ENCODE measurements at regions of chr2 and their contacts with region 1.

Region 1: DNA sequence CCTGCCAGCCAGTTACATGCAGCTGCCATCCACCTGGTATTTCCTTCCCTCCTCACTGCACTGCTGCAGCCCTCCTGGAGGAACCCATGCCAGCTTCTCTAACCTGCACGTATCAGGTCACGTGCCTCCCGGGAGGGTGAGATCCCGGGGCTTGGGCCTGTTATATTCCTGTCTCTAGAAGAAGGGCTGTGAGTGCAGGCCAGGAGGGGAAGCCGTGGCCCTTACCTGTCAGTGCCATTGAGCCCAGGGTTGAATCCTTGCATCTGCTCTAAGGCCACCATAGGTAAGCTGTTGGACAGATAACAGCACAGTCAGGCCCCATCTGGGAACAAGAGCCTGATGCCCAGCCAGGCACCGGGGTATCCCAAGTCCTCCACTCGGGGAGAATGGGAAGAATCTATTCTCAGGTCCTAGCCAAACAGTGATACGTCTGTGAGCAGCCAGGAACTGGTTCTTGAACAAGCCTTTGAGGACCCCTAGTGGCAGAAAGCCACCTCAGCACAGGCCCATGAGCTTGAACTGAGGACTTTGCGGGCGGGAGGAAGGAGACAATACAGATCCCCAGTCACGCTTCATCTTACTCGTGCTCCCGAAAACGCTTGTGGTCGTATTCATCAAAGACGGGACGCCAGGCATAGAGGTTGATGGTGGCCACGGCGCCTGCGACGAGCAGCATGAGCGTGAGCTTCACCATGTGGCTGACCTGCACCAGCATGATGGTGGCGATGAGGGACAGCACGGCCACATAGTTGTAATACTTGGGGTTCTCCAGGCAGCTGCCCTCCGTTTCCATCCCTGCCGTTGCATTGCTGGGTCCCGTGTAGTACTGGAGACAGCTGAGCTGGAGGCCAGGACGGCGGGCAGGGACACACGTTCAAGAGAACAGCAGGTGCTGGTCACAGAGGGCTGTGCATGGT is 34.4 kb downstream of the CENPO start:
- DNase-seq: peak; percentile 80 to 88 (median 82)
- ATAC-seq: peak; percentile 97
- H3K4me3 ChIP-seq: no peak overlapping the region
- H3K27ac ChIP-seq: no peak overlapping the region
- H3K4me1 ChIP-seq: peaks cover 0 to 5% of the 10 kb centered on the region in 2 experiments; a peak in 2 of 5 replicates
- H3K27me3 ChIP-seq: no peaks in the 10 kb centered on the region
- CTCF ChIP-seq: peak; percentile 85 to 95 (median 94)
- EP300 ChIP-seq: no peak
- POLR2A ChIP-seq: no peak; the same call in 1 of the 2 replicates
- RAD21 ChIP-seq: peak; percentile 89 to 93

Region 2: GRCh38 chr2:24409700-24410556 is 417.7 kb before region 1 on chr2:
- CTCF ChIA-PET with region 1: interaction called, 32 read pairs
- POLR2A ChIA-PET with region 1: no interaction called
- in situ Hi-C with region 1: no loop called
- intact Hi-C with region 1: loop called (anchors 1 kb)
- DNase-seq: peak; percentile 57 to 78 (median 63)
- ATAC-seq: peak; percentile 95
- H3K4me3 ChIP-seq: no peak overlapping the region
- H3K27ac ChIP-seq: no peak overlapping the region
- H3K4me1 ChIP-seq: peaks cover 0 to 3% of the 10 kb centered on the region in 2 experiments; a peak in 1 of 5 replicates
- H3K27me3 ChIP-seq: no peaks in the 10 kb centered on the region
- CTCF ChIP-seq: peak; percentile 79 to 91 (median 80)
- EP300 ChIP-seq: no peak
- POLR2A ChIP-seq: no peak
- RAD21 ChIP-seq: peak; percentile 93 to 95

Region 3: GRCh38 chr2:24490674-24491625 is 336.6 kb before region 1 on chr2 and contains the start of gene NCOA1:
- CTCF ChIA-PET with region 1: no interaction called
- POLR2A ChIA-PET with region 1: no interaction called
- in situ Hi-C with region 1: no loop called
- intact Hi-C with region 1: loop called (anchors 5 kb)
- DNase-seq: peak; percentile 88 to 97 (median 92)
- ATAC-seq: peak; percentile 87
- H3K4me3 ChIP-seq: peak within 1 kb of the TSS; percentile 69
- H3K27ac ChIP-seq: peak within 1 kb of the TSS; percentile 77
- H3K4me1 ChIP-seq: peaks cover 24 to 44% of the 10 kb centered on the region in 2 experiments
- H3K27me3 ChIP-seq: no peaks in the 10 kb centered on the region
- CTCF ChIP-seq: peak in 2 of 3 experiments; percentile 8 to 30; a peak in 3 of 6 replicates
- EP300 ChIP-seq: 0 out of 2 replicates have a peak, but pooled peaks have one; percentile 34
- POLR2A ChIP-seq: peak; percentile 57; the same call in 1 of the 2 replicates
- RAD21 ChIP-seq: peak in 1 of 2 experiments; percentile 31
- polyA plus RNA-seq, gene NCOA1: 4.9 to 6.2 TPM

Region 4: DNA sequence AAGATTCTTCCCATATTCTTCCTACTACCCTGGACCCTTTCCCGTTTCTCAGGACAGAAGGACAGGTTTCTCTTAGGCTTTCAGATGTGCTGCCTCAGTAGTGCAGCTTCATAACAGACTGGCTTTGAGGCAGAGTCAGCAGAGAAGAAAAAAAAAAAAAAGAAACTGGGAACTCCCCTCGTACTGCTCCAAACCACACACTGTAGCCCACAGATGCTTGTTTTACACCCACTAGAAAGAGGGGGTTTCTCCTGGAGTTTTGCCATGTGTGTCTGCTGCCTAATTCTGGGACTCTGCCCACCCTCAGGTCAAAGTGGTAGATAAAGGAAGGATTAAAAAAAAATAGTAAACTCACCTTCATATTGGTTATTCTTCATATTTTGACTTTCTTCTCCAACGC is 240.6 kb before region 1 on chr2:
- CTCF ChIA-PET with region 1: no interaction called
- POLR2A ChIA-PET with region 1: no interaction called
- in situ Hi-C with region 1: no loop called
- intact Hi-C with region 1: no loop called
- DNase-seq: no peak
- ATAC-seq: no peak
- H3K4me3 ChIP-seq: no peak overlapping the region
- H3K27ac ChIP-seq: no peak overlapping the region
- H3K4me1 ChIP-seq: peaks cover 3 to 4% of the 10 kb centered on the region in 2 experiments; a peak in 2 of 5 replicates
- H3K27me3 ChIP-seq: no peaks in the 10 kb centered on the region
- CTCF ChIP-seq: no peak
- EP300 ChIP-seq: no peak
- POLR2A ChIP-seq: no peak
- RAD21 ChIP-seq: no peak

Region 5: GRCh38 chr2:24754985-24755705 is 72.4 kb before region 1 on chr2:
- CTCF ChIA-PET with region 1: no interaction called
- POLR2A ChIA-PET with region 1: no interaction called
- in situ Hi-C with region 1: no loop called
- intact Hi-C with region 1: no loop called
- DNase-seq: peak in 1 of 4 experiments; percentile 14
- ATAC-seq: peak; percentile 71
- H3K4me3 ChIP-seq: no peak overlapping the region
- H3K27ac ChIP-seq: no peak overlapping the region
- H3K4me1 ChIP-seq: peaks cover 0 to 13% of the 10 kb centered on the region in 2 experiments; a peak in 2 of 5 replicates
- H3K27me3 ChIP-seq: no peaks in the 10 kb centered on the region
- CTCF ChIP-seq: no peak
- EP300 ChIP-seq: no peak
- POLR2A ChIP-seq: no peak
- RAD21 ChIP-seq: no peak

Region 6: GRCh38 chr2:24779116-24779515 is 48.5 kb before region 1 on chr2:
- CTCF ChIA-PET with region 1: no interaction called
- POLR2A ChIA-PET with region 1: no interaction called
- in situ Hi-C with region 1: no loop called
- intact Hi-C with region 1: no loop called
- DNase-seq: no peak
- ATAC-seq: no peak
- H3K4me3 ChIP-seq: no peak overlapping the region
- H3K27ac ChIP-seq: no peak overlapping the region
- H3K4me1 ChIP-seq: no peaks in the 10 kb centered on the region
- H3K27me3 ChIP-seq: no peaks in the 10 kb centered on the region; a peak in 1 of 5 replicates
- CTCF ChIP-seq: no peak
- EP300 ChIP-seq: no peak
- POLR2A ChIP-seq: no peak
- RAD21 ChIP-seq: no peak

Region 7: DNA sequence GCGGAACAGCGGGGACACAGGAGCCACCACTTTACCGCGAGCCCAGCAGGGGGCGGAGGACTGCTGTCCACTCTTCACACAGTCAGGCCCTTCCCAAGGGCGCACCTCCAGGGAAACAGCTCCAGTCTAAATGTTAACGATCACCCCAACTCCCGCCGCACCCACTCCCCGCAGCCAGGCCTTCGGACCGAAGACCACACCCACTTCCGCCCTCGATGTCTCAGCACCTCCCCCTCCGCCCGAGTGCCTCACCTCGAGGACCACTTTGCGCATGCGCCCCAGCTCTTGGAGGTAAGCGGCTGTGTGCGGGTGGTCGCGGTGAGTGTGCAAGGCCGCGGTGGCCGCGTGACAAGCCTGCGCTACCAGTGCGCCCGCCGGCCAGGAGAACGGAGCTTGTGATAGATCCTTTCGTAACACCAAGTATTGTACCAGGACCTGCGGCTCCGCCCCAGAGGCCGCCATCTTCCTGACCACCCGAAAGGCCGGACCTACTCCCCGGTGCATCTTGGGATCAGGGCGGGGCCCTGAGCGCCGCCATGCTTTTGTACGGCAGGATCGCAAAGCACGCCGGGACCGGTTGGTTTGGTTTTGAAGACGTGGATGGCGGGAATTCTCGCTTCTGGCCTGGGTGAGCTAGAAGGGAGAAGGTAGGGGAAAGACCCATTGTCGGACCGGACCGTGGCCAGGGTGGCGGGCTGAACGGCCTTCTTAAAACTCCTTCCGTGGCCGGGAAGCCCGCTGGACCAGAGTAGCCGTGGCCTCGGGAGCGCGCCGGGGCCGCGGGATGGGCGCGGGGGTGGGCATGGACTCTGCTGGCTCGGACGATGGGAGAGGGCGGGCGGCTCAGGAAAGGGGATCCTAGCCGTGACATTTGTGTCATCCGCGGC is 34.5 kb before region 1 on chr2 and contains the starts of genes CENPO and PTRHD1:
- CTCF ChIA-PET with region 1: interaction called, 6 read pairs
- POLR2A ChIA-PET with region 1: no interaction called
- in situ Hi-C with region 1: no loop called
- intact Hi-C with region 1: loop called (anchors 1 kb)
- DNase-seq: peak; percentile 95 to 98 (median 96)
- ATAC-seq: peak; percentile 89
- H3K4me3 ChIP-seq: peak within 1 kb of the TSS; percentile 87
- H3K27ac ChIP-seq: peak within 1 kb of the TSS; percentile 99
- H3K4me1 ChIP-seq: peaks cover 9 to 35% of the 10 kb centered on the region in 2 experiments; a peak in 4 of 5 replicates
- H3K27me3 ChIP-seq: no peaks in the 10 kb centered on the region
- CTCF ChIP-seq: peak; percentile 82 to 87 (median 85)
- EP300 ChIP-seq: peak; percentile 48
- POLR2A ChIP-seq: peak; percentile 93
- RAD21 ChIP-seq: peak; percentile 77
- polyA plus RNA-seq, gene CENPO: 30.6 to 38.9 TPM
- polyA plus RNA-seq, gene PTRHD1: 32.9 to 46.6 TPM

Region 8: DNA sequence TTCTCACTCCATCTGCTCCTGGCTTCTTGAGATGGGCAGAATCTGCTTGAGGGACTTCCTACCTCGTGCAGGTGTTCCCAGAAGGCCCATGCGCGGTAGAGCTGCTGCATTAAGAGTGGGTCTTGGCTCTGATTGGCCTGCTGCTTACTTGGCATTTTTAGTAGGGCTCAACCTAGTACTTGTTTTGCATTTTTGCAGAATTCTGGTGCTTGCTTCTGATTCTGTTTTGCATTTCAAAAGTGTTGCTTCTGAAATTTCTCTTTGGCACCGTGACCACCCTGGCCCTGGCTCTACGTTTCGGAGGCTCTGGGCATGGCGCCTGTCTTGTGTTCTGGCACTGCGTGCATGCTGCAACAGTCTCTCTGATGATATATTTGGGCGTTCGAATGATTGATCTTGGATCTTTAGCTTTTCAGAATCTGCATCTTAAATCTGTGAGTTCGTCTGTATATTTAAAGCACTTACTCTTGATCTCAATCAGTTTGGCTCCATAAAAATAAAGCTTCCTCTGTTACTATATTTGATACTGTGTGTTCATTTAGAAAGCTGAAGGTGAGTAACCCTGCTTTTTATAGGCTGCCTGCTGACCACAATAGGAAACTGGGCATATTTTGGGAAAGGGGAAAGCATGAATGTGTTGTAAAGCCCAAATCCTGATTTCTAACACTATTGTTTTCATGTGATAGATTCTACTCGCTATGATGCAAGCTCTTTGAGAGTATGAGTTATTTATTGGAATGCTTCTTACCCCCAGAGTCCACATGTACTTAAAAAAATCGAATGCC is 236.5 kb after region 1 on chr2:
- CTCF ChIA-PET with region 1: no interaction called
- POLR2A ChIA-PET with region 1: no interaction called
- in situ Hi-C with region 1: no loop called
- intact Hi-C with region 1: no loop called
- DNase-seq: no peak
- ATAC-seq: no peak
- H3K4me3 ChIP-seq: no peak overlapping the region
- H3K27ac ChIP-seq: no peak overlapping the region
- H3K4me1 ChIP-seq: no peaks in the 10 kb centered on the region
- H3K27me3 ChIP-seq: peaks cover 7 to 34% of the 10 kb centered on the region in 2 experiments; a peak in 4 of 5 replicates
- CTCF ChIP-seq: no peak
- EP300 ChIP-seq: no peak
- POLR2A ChIP-seq: no peak
- RAD21 ChIP-seq: no peak

Region 9: DNA sequence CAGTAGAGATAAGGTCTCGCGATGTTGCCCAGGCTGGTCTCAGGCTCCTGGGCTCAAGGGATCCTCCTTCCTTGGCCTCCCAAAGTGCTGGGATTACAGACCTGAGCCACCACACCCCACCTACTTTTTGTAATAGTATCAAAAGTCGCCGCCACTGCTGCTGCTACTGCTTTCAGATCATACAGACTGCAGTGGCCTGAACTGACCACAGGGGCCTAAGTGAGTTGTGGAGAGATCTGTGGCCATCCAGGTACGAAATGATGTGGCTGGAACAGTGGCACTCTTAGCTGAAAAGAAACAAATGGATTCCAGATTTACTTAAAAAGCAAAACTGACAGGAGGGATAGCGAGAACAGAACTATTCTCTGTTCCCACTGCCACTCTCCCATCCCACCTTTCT is 373.7 kb after region 1 on chr2:
- CTCF ChIA-PET with region 1: no interaction called
- POLR2A ChIA-PET with region 1: no interaction called
- in situ Hi-C with region 1: no loop called
- intact Hi-C with region 1: loop called (anchors 5 kb)
- DNase-seq: peak; percentile 43 to 53 (median 50)
- ATAC-seq: peak; percentile 93
- H3K4me3 ChIP-seq: no peak overlapping the region
- H3K27ac ChIP-seq: no peak overlapping the region
- H3K4me1 ChIP-seq: peaks cover 0 to 11% of the 10 kb centered on the region in 2 experiments; a peak in 2 of 5 replicates
- H3K27me3 ChIP-seq: 0 out of 5 replicates have a peak, but pooled peaks cover 0 to 2% of the 10 kb centered on the region in 2 experiments
- CTCF ChIP-seq: peak; percentile 42 to 54 (median 48); a peak in 3 of 6 replicates
- EP300 ChIP-seq: no peak
- POLR2A ChIP-seq: no peak
- RAD21 ChIP-seq: peak in 1 of 2 experiments; percentile 33; a peak in 2 of 4 replicates